ENCODE measurements at regions of chr4 and their contacts with region 1.

Region 1: GRCh38 chr4:151362404-151363164 is 37.2 kb upstream of the SH3D19 start:
- DNase-seq: peak; percentile 80 to 84
- ATAC-seq: peak; percentile 88 to 98 (median 95)
- H3K4me3 ChIP-seq: no peak overlapping the region
- H3K27ac ChIP-seq: no peak overlapping the region
- H3K4me1 ChIP-seq: peaks cover 0 to 2% (median 0%) of the 10 kb centered on the region in 9 donors
- H3K27me3 ChIP-seq: no peaks in the 10 kb centered on the region
- CTCF ChIP-seq: peak; percentile 91 to 99 (median 98)

Region 2: GRCh38 chr4:151117371-151117962 is 245.1 kb before region 1 on chr4:
- intact Hi-C with region 1: loop called in 7 of 10 experiments (anchors 1 to 5 kb)
- DNase-seq: peak in 1 of 2 donors; percentile 68
- ATAC-seq: peak in 7 of 8 donors; percentile 47 to 66 (median 59)
- H3K4me3 ChIP-seq: no peak overlapping the region
- H3K27ac ChIP-seq: peak overlapping the region in 4 of 10 donors; percentile 20 to 42 (median 34)
- H3K4me1 ChIP-seq: peaks cover 0 to 24% (median 9%) of the 10 kb centered on the region in 9 donors
- H3K27me3 ChIP-seq: no peaks in the 10 kb centered on the region
- CTCF ChIP-seq: peak; percentile 41 to 85 (median 77)

Region 3: GRCh38 chr4:151276787-151277562 is 85.6 kb before region 1 on chr4 and contains the start of gene PRSS48:
- intact Hi-C with region 1: loop called in 8 of 10 experiments (anchors 1 to 10 kb)
- DNase-seq: peak; percentile 57 to 72
- ATAC-seq: peak in 7 of 8 donors; percentile 79 to 89 (median 83)
- H3K4me3 ChIP-seq: no peak within 1 kb of the TSS
- H3K27ac ChIP-seq: no peak within 1 kb of the TSS
- H3K4me1 ChIP-seq: peaks cover 0 to 41% (median 27%) of the 10 kb centered on the region in 9 donors
- H3K27me3 ChIP-seq: no peaks in the 10 kb centered on the region
- CTCF ChIP-seq: peak; percentile 58 to 82 (median 75)
- total RNA-seq, gene PRSS48: not detected

Region 4: GRCh38 chr4:151325111-151325948 is 37.3 kb before region 1 on chr4 and contains the start of gene SH3D19:
- intact Hi-C with region 1: loop called in 1 of 10 experiments (anchors 5 kb)
- DNase-seq: peak; percentile 77 to 81
- ATAC-seq: peak; percentile 91 to 95 (median 92)
- H3K4me3 ChIP-seq: peak within 1 kb of the TSS; percentile 40 to 93 (median 80)
- H3K27ac ChIP-seq: peak within 1 kb of the TSS; percentile 81 to 98 (median 94)
- H3K4me1 ChIP-seq: peaks cover 4 to 42% (median 30%) of the 10 kb centered on the region in 9 donors
- H3K27me3 ChIP-seq: peaks cover 0 to 35% (median 0%) of the 10 kb centered on the region in 7 donors
- CTCF ChIP-seq: peak in 3 of 9 donors; percentile 25 to 39 (median 35)
- total RNA-seq, gene SH3D19: 97.4 to 175 (median 123) TPM

Region 5: GRCh38 chr4:151468715-151469696 is 106.4 kb after region 1 on chr4:
- intact Hi-C with region 1: no loop called
- DNase-seq: no peak
- ATAC-seq: no peak
- H3K4me3 ChIP-seq: no peak overlapping the region
- H3K27ac ChIP-seq: no peak overlapping the region
- H3K4me1 ChIP-seq: no peaks in the 10 kb centered on the region
- H3K27me3 ChIP-seq: no peaks in the 10 kb centered on the region
- CTCF ChIP-seq: no peak

Region 6: GRCh38 chr4:151604238-151604637 is 241.7 kb after region 1 on chr4:
- intact Hi-C with region 1: loop called in 3 of 10 experiments (anchors 10 kb)
- DNase-seq: no peak
- ATAC-seq: no peak
- H3K4me3 ChIP-seq: no peak overlapping the region
- H3K27ac ChIP-seq: no peak overlapping the region
- H3K4me1 ChIP-seq: peaks cover 0 to 6% (median 0%) of the 10 kb centered on the region in 9 donors
- H3K27me3 ChIP-seq: no peaks in the 10 kb centered on the region
- CTCF ChIP-seq: peak in 6 of 9 donors; percentile 17 to 49 (median 36)

Region 7: DNA sequence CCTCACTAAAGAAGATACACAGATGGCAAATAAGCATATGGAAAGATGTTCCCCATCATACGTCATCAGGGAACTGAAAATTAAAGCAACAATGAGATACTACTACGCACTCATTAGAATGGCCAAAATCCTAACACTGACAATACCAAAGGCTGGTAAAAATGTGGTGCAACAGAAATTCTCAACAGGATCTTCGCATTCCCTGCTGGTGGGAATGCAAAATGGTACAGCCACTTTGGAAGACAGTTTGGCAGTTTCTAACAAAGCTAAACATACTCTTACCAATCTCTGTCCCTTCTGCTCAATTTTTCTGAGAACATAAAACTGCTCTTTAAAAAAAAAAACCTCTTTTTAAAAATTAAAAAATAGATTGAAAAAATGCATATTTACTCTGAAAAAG is 873.1 kb after region 1 on chr4:
- intact Hi-C with region 1: no loop called
- DNase-seq: no peak
- ATAC-seq: no peak
- H3K4me3 ChIP-seq: no peak overlapping the region
- H3K27ac ChIP-seq: no peak overlapping the region
- H3K4me1 ChIP-seq: no peaks in the 10 kb centered on the region
- H3K27me3 ChIP-seq: no peaks in the 10 kb centered on the region
- CTCF ChIP-seq: no peak